HepG2 (cell line): ENCODE measurements at regions of chr6 and their contacts with region 1.

Region 1: GRCh38 chr6:110949679-110950285 is 8.7 kb upstream of the GTF3C6 start:
- DNase-seq: no peak
- ATAC-seq: no peak
- H3K4me3 ChIP-seq: no peak overlapping the region
- H3K27ac ChIP-seq: no peak overlapping the region
- H3K4me1 ChIP-seq: peaks cover 45% of the 10 kb centered on the region
- H3K27me3 ChIP-seq: no peaks in the 10 kb centered on the region
- CTCF ChIP-seq: peak; percentile 23; the same call in 1 of the 2 replicates
- EP300 ChIP-seq: no peak
- POLR2A ChIP-seq: no peak
- RAD21 ChIP-seq: no peak

Region 2: DNA sequence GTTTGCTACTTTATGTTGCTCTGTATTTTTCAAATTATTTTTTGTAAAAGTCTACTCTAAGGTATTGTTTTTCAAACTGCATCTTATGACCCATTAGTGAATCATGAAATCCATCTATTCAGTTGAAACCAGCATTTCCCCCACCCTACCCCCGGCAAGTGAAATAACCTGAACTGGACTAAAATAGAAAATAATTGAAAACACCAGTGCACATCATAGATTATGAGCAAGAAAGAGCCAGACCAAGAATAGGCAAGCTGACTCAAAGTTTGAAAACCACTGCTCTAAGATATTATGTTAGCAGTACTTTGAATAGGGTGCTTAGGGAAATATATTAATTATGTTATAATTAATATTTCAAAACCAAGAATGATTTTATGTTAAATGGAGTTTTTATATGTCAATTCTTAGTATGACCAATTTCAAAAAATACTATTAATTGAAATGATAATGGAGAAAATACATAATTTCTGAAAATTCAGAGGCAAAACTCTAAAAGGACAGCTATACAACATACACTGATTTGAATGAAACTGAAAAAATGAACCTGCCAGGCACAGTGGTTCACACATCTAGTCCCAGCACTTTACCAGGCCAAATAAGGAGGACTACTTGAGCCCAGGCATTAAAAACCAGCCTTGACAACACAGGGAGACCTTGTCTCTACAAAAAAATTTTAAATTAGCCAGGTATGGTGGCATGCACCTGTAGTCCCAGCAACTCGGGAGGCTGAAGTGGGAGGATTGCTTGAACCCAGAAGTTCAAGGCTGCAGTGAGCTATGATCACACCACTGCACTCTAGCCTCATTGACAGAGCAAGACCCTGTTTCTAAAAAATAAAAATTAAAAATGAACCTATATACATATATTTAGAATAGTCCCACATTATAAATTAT is 246.5 kb before region 1 on chr6:
- CTCF ChIA-PET with region 1: no interaction called
- POLR2A ChIA-PET with region 1: no interaction called
- in situ Hi-C with region 1: no loop called
- intact Hi-C with region 1: loop called (anchors 5 kb)
- DNase-seq: no peak
- ATAC-seq: peak; percentile 44; the same call in 2 of the 3 replicates
- H3K4me3 ChIP-seq: no peak overlapping the region; a peak in 1 of 6 replicates
- H3K27ac ChIP-seq: peak overlapping the region; percentile 1
- H3K4me1 ChIP-seq: peaks cover 34% of the 10 kb centered on the region
- H3K27me3 ChIP-seq: no peaks in the 10 kb centered on the region
- CTCF ChIP-seq: no peak
- EP300 ChIP-seq: no peak
- POLR2A ChIP-seq: no peak
- RAD21 ChIP-seq: no peak